PC-3 (cell line): ENCODE measurements at regions of chr19 and their contacts with region 1.

Region 1: GRCh38 chr19:49676690-49677231 is 310 bp upstream of the PRMT1 start:
- DNase-seq: peak; percentile 100
- ATAC-seq: peak; percentile 77
- H3K4me3 ChIP-seq: peak overlapping the region; percentile 86
- H3K27ac ChIP-seq: peak overlapping the region; percentile 80
- H3K4me1 ChIP-seq: peaks cover 25% of the 10 kb centered on the region
- H3K27me3 ChIP-seq: no peaks in the 10 kb centered on the region
- CTCF ChIP-seq: no peak

Region 2: GRCh38 chr19:49580264-49581006 is 96.3 kb before region 1 on chr19 and contains the start of gene NOSIP:
- CTCF ChIA-PET with region 1: no interaction called
- POLR2A ChIA-PET with region 1: interaction called, 10 read pairs
- intact Hi-C with region 1: no loop called
- DNase-seq: peak; percentile 99
- ATAC-seq: peak; percentile 98
- H3K4me3 ChIP-seq: peak within 1 kb of the TSS; percentile 96
- H3K27ac ChIP-seq: no peak within 1 kb of the TSS
- H3K4me1 ChIP-seq: peaks cover 14% of the 10 kb centered on the region
- H3K27me3 ChIP-seq: no peaks in the 10 kb centered on the region
- CTCF ChIP-seq: no peak
- total RNA-seq, gene NOSIP: 195 and 214 TPM in 2 replicates

Region 3: GRCh38 chr19:49640113-49640898 is 36.5 kb before region 1 on chr19 and contains the start of gene RRAS:
- CTCF ChIA-PET with region 1: interaction called, 6 read pairs
- POLR2A ChIA-PET with region 1: interaction called, 21 read pairs
- intact Hi-C with region 1: loop called (anchors 1 kb)
- DNase-seq: peak; percentile 100
- ATAC-seq: peak; percentile 65
- H3K4me3 ChIP-seq: peak within 1 kb of the TSS; percentile 75
- H3K27ac ChIP-seq: peak within 1 kb of the TSS; percentile 97
- H3K4me1 ChIP-seq: peaks cover 52% of the 10 kb centered on the region
- H3K27me3 ChIP-seq: no peaks in the 10 kb centered on the region
- CTCF ChIP-seq: no peak
- total RNA-seq, gene RRAS: 24.0 and 32.0 TPM in 2 replicates

Region 4: DNA sequence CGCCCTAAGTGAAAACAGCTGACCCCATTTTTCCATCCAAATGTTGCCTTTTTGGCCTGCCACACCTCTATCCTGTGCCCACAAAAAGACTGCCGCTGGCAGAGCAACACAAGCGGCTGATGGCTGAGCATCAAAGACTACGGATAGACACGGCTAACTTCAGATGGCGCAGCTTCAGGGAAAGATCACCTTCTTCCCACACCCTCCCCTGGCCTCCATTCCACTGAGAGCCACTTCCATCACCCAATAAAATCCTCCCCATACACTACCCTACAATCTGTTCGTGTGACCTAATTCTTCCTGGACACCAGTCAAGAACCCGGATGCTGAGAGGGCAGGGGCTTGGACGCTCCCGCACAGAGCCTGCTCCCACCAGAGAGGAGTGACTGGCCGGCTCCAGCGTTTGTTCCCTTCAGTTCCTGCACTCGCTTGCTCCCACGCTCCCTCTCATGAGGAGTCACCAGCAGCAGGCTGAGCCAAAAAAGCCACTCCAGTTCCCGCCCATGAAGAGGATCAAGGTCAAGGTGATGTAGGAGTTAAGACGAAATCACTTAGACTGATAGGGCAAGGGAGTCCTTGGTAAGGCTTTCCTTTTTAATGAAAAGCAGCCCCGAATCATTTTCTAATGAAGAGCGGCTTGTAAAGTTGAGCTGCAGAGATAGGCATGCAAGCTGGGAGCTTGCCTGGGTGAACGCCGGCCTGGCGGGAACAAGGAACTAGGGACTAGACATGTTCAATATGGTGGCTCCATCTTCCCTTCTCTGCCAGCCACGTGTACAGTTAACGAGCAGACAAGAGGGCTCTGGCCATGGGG is 50.7 kb after region 1 on chr19:
- CTCF ChIA-PET with region 1: no interaction called
- POLR2A ChIA-PET with region 1: interaction called, 10 read pairs
- intact Hi-C with region 1: no loop called
- DNase-seq: no peak
- ATAC-seq: no peak
- H3K4me3 ChIP-seq: no peak overlapping the region
- H3K27ac ChIP-seq: no peak overlapping the region
- H3K4me1 ChIP-seq: peaks cover 5% of the 10 kb centered on the region
- H3K27me3 ChIP-seq: no peaks in the 10 kb centered on the region
- CTCF ChIP-seq: no peak

Region 5: DNA sequence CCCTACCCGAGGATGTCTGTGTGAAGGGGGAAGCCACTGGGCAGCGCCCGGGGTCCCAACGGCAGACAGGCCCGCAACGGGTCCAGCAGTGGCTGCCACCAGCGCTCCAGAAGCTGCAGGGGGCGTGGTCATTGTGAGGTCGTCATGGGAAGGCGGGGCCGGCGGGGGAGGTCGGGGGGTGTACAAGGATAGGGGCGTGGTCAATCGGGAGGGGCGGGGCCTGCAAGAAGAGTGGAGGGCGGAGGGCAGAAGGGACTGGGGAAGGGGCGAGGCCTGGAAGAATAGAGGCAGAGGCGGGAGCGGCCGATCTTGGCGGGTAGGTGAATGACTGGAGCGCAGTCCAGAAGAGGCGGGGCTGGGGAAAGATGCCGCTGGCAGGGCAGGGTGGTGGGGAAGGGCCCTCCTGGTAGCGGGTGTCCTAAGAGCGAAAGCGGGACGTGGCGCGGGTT is 132.0 kb after region 1 on chr19:
- CTCF ChIA-PET with region 1: no interaction called
- POLR2A ChIA-PET with region 1: no interaction called
- intact Hi-C with region 1: loop called (anchors 5 kb)
- DNase-seq: peak; percentile 79
- ATAC-seq: peak; percentile 56
- H3K4me3 ChIP-seq: peak overlapping the region; percentile 77
- H3K27ac ChIP-seq: no peak overlapping the region
- H3K4me1 ChIP-seq: peaks cover 15% of the 10 kb centered on the region
- H3K27me3 ChIP-seq: no peaks in the 10 kb centered on the region
- CTCF ChIP-seq: no peak